Adrenal gland (tissue), 19 donors: ENCODE measurements at regions of chr1 and their contacts with region 1.

Region 1: GRCh38 chr1:147890177-147890790 is 12.3 kb upstream of the GJA8 start:
- DNase-seq: peak; percentile 45 to 81 (median 77)
- H3K4me3 ChIP-seq: no peak overlapping the region
- H3K27ac ChIP-seq: no peak overlapping the region
- H3K4me1 ChIP-seq: no peaks in the 10 kb centered on the region
- H3K27me3 ChIP-seq: no peaks in the 10 kb centered on the region
- CTCF ChIP-seq: peak; percentile 32 to 67 (median 51)
- POLR2A ChIP-seq: no peak

Region 2: DNA sequence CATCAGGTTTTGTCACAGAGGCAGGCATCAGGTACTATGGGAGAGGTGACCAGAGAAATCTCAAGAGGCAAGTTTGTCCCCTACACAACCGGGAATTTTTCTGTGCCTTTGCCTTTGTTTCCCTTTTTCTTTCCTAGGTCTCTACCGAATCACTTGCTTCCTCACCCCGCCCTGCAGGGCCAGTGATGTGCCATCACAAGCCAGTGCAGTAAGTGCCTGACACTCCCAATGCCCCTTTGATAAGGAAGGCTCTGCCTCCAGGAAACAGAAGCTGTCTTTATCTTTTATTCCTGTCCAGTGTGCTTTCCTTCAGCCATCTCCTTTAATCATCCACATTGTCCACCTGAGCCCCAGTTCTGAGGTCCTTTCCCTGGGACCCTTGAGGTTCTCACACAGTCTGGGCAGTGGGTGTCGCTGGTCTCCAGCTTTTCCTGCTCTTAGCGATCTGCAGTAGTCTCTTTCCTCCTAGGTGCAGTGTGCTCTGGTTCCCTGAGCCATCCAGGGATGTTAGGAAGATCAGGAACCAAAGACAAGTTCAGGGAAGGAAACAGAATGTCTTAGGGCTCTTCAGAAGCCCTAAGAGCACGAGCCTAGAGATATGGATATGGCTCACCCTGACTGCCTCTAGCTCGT is 166.5 kb before region 1 on chr1:
- intact Hi-C with region 1: loop called (anchors 5 kb)
- DNase-seq: peak; percentile 31 to 68 (median 55)
- H3K4me3 ChIP-seq: no peak overlapping the region
- H3K27ac ChIP-seq: no peak overlapping the region
- H3K4me1 ChIP-seq: no peaks in the 10 kb centered on the region
- H3K27me3 ChIP-seq: no peaks in the 10 kb centered on the region
- CTCF ChIP-seq: peak; percentile 29 to 75 (median 61)
- POLR2A ChIP-seq: no peak